H1 (cell line): ENCODE measurements at regions of chr1 and their contacts with region 1.

Region 1: GRCh38 chr1:160006312-160006940 is 25.4 kb downstream of the PIGM start:
- DNase-seq: peak; percentile 46 to 78
- H3K4me3 ChIP-seq: no peak overlapping the region
- H3K27ac ChIP-seq: no peak overlapping the region
- H3K4me1 ChIP-seq: no peaks in the 10 kb centered on the region
- H3K27me3 ChIP-seq: no peaks in the 10 kb centered on the region
- CTCF ChIP-seq: peak; percentile 94 to 97 (median 94)
- EP300 ChIP-seq: no peak
- POLR2A ChIP-seq: no peak
- RAD21 ChIP-seq: peak; percentile 84 to 87

Region 2: GRCh38 chr1:159821171-159821867 is 185.1 kb before region 1 on chr1:
- CTCF ChIA-PET with region 1: interaction called, 15 read pairs
- POLR2A ChIA-PET with region 1: no interaction called
- DNase-seq: no peak
- H3K4me3 ChIP-seq: no peak overlapping the region
- H3K27ac ChIP-seq: no peak overlapping the region
- H3K4me1 ChIP-seq: 0 out of 7 replicates have a peak, but pooled peaks cover 0 to 3% (median 0%) of the 10 kb centered on the region in 4 experiments
- H3K27me3 ChIP-seq: no peaks in the 10 kb centered on the region
- CTCF ChIP-seq: peak in 2 of 3 experiments; percentile 34 to 48; a peak in 3 of 4 replicates
- EP300 ChIP-seq: no peak
- POLR2A ChIP-seq: no peak
- RAD21 ChIP-seq: peak in 1 of 2 experiments; percentile 15; a peak in 2 of 4 replicates

Region 3: DNA sequence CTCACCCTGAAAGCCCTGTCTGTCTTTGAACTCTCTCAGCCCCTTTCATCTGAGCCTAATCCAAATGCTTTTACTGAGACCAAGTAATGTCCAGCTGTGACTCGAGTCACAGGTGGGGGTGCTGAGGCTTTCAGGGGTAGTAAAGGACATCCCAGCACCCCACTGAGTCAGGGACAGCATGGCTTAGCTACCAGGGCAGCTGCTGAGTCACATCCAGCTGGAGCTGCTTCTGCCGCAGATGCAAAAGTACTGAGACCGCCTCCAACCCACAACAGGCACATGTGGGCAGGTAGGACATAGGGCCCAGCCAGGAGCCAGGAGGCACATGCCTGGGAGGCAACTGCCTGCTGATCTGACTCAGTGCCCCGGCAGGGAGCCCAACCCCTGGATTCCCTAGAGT is 137.3 kb before region 1 on chr1:
- CTCF ChIA-PET with region 1: interaction called, 10 read pairs
- POLR2A ChIA-PET with region 1: no interaction called
- DNase-seq: no peak
- H3K4me3 ChIP-seq: no peak overlapping the region
- H3K27ac ChIP-seq: no peak overlapping the region
- H3K4me1 ChIP-seq: no peaks in the 10 kb centered on the region; a peak in 1 of 7 replicates
- H3K27me3 ChIP-seq: no peaks in the 10 kb centered on the region
- CTCF ChIP-seq: no peak
- EP300 ChIP-seq: no peak
- POLR2A ChIP-seq: no peak
- RAD21 ChIP-seq: no peak

Region 4: GRCh38 chr1:159916184-159917051 is 90.0 kb before region 1 on chr1:
- CTCF ChIA-PET with region 1: interaction called, 43 read pairs
- POLR2A ChIA-PET with region 1: no interaction called
- DNase-seq: no peak
- H3K4me3 ChIP-seq: no peak overlapping the region
- H3K27ac ChIP-seq: peak overlapping the region; percentile 58
- H3K4me1 ChIP-seq: peaks cover 9 to 24% (median 15%) of the 10 kb centered on the region in 4 experiments
- H3K27me3 ChIP-seq: no peaks in the 10 kb centered on the region
- CTCF ChIP-seq: no peak
- EP300 ChIP-seq: no peak
- POLR2A ChIP-seq: no peak
- RAD21 ChIP-seq: no peak

Region 5: GRCh38 chr1:159945483-159946241 is 60.8 kb before region 1 on chr1 and contains the start of gene IGSF9:
- CTCF ChIA-PET with region 1: interaction called, 696 read pairs
- POLR2A ChIA-PET with region 1: interaction called, 41 read pairs
- DNase-seq: peak; percentile 81 to 96
- H3K4me3 ChIP-seq: peak within 1 kb of the TSS; percentile 49 to 82 (median 62)
- H3K27ac ChIP-seq: peak within 1 kb of the TSS; percentile 80; the same call in 1 of the 2 replicates
- H3K4me1 ChIP-seq: peaks cover 7 to 24% (median 15%) of the 10 kb centered on the region in 4 experiments
- H3K27me3 ChIP-seq: no peaks in the 10 kb centered on the region
- CTCF ChIP-seq: peak; percentile 27 to 41 (median 40)
- EP300 ChIP-seq: no peak
- POLR2A ChIP-seq: peak; percentile 19 to 79
- RAD21 ChIP-seq: peak; percentile 37 to 44; a peak in 3 of 4 replicates
- total RNA-seq, gene IGSF9: 28.1 and 29.2 TPM in 2 replicates

Region 6: DNA sequence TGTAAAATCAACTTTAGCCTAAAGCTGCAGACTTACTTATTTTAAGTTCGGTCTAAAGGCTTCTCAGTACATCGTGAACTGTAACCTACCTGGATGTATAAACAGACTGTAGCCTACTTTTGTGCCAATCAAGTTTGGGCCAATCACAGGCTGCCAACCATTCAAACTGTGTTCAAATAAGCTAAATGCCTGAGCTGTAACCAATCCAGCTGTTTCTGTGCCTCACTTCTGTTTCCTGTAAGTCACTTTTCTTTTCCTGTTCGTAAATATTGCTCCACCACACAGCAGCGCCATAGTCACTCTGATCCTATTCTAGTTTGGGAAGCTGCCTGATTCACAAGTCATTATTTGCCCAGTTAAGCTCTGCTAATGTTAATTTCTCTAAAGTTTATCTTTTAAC is 14.9 kb before region 1 on chr1:
- CTCF ChIA-PET with region 1: interaction called, 98 read pairs
- POLR2A ChIA-PET with region 1: interaction called, 3 read pairs
- DNase-seq: peak in 1 of 2 experiments; percentile 36
- H3K4me3 ChIP-seq: no peak overlapping the region
- H3K27ac ChIP-seq: no peak overlapping the region
- H3K4me1 ChIP-seq: no peaks in the 10 kb centered on the region
- H3K27me3 ChIP-seq: no peaks in the 10 kb centered on the region
- CTCF ChIP-seq: no peak
- EP300 ChIP-seq: no peak
- POLR2A ChIP-seq: no peak
- RAD21 ChIP-seq: no peak